ENCODE measurements at regions of chr2 and their contacts with region 1.

Region 1: GRCh38 chr2:11842336-11842735 is 95.9 kb downstream of the LPIN1 start:
- DNase-seq: peak in 11 of 42 donors; percentile 16 to 60 (median 29)

Region 2: DNA sequence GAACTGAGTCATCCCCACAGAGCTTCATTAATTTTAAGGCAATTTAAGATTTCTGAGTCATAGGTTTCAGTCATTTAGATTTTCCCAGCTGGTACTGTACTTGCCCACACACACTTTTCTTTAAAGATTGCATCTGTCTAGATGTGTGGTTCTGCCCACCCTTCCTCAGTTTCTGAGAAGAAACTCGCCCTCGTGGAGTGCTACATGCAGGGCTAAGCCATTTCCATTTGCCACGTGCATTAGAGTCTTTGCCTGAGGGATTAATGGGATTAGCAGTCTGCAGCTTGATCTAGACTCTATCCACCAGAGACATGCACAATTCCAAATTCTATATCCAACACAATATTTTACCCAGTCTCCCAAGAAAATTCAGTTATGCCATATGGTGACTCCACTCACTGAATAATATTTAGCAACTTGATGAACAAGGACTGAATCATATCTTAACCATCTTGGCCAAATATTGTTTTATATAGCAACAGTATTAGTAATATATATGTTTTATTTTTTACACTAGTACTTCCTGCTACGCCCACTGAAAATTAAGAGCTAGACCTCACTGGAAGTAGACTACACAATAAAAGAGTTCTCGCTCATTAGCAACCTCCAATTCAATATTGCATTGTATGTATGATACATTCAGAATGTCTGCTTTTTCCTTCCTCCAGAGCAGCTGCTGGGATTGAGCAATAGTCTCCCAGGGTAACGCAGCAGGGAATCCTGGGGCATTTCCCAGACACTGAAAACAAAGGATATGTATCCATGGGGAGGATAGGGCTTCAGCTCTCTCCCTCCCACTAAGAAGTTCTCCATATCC is 860.2 kb after region 1 on chr2:
- intact Hi-C with region 1: loop called (anchors 5 kb)
- DNase-seq: peak in 14 of 42 donors; percentile 28 to 68 (median 38)

Measured in head of caudate nucleus (tissue), 42 donors.